ENCODE measurements at regions of chr3 and their contacts with region 1.

Region 1: GRCh38 chr3:169029674-169030285 is 633.7 kb downstream of the MECOM start:
- DNase-seq: no peak
- H3K4me3 ChIP-seq: no peak overlapping the region
- H3K27ac ChIP-seq: no peak overlapping the region
- H3K4me1 ChIP-seq: no peaks in the 10 kb centered on the region
- H3K27me3 ChIP-seq: no peaks in the 10 kb centered on the region

Region 2: GRCh38 chr3:169041677-169042171 is 11.9 kb after region 1 on chr3:
- CTCF ChIA-PET with region 1: interaction called, 13 read pairs
- POLR2A ChIA-PET with region 1: no interaction called
- DNase-seq: peak; percentile 46 to 79 (median 63)
- H3K4me3 ChIP-seq: no peak overlapping the region
- H3K27ac ChIP-seq: no peak overlapping the region
- H3K4me1 ChIP-seq: peaks cover 0 to 13% (median 6%) of the 10 kb centered on the region in 4 experiments
- H3K27me3 ChIP-seq: no peaks in the 10 kb centered on the region